ENCODE measurements at regions of chr11 and their contacts with region 1.

Region 1: DNA sequence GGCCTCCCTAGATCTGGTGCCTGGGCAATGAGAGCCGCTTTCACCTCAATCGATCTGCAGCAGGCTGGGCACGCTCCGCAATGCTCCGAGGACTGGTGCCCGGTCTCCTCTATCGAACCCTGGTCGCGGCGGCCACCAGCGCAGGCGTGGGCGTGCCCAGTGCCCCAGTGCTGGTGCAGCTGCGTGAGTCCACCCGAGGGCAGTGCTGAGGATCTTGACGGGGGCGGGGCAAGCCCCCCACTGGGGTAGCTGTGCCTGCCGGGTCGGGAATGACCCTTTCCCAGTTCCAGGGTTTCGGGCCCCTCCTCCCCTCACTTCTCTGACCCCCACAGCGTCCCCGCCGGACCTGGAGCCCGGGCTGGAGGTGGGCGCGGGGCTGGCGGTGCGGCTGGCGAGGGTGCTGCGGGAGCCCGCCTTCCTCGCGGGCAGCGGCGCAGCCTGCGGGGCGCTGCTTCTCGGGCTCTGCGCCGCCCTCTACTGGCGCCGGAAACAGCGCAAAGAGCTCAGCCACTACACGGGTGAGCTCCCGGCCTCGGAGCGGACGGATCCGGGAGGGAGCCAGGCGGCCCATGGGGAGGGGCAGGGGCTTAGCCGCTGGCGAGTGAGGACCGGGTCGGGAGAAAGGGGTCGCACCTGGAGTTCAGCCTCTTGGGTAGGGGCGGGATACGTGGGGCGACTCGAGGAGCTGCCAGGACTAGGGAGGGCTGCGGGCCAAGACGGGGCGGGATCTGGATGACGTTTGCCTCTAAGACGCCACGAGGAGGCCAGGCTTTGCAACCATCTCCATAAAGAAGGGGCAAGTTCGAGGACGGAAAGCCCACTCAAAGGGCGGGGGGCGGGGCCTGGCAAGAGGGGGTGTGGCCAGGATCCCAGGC is 10.9 kb downstream of the ROBO3 start:
- DNase-seq: peak; percentile 71 to 84 (median 81)
- ATAC-seq: peak; percentile 94
- H3K4me3 ChIP-seq: peak overlapping the region; percentile 98
- H3K4me3 Mint-ChIP-seq: peak overlapping the region; percentile 85 to 94 (median 90)
- H3K27ac ChIP-seq: peak overlapping the region; percentile 79
- H3K27ac Mint-ChIP-seq: peak overlapping the region; percentile 77 to 95 (median 92)
- H3K4me1 ChIP-seq: peaks cover 7 to 9% of the 10 kb centered on the region in 2 donors
- H3K4me1 Mint-ChIP-seq: peaks cover 11 to 34% (median 24%) of the 10 kb centered on the region in 7 donors
- H3K27me3 ChIP-seq: peaks cover 0 to 3% of the 10 kb centered on the region in 2 donors
- H3K27me3 Mint-ChIP-seq: peaks cover 18 to 49% (median 34%) of the 10 kb centered on the region in 5 donors

Region 2: GRCh38 chr11:123741159-123742028 is 1134.8 kb before region 1 on chr11 and contains the start of gene ZNF202:
- CTCF ChIA-PET with region 1: no interaction called
- POLR2A ChIA-PET with region 1: no interaction called
- intact Hi-C with region 1: loop called (anchors 1 to 5 kb)
- DNase-seq: peak; percentile 83 to 92 (median 89)
- ATAC-seq: peak; percentile 98
- H3K4me3 ChIP-seq: peak within 1 kb of the TSS; percentile 92
- H3K4me3 Mint-ChIP-seq: peak within 1 kb of the TSS; percentile 85 to 100 (median 96)
- H3K27ac ChIP-seq: peak within 1 kb of the TSS; percentile 85
- H3K27ac Mint-ChIP-seq: peak within 1 kb of the TSS; percentile 91 to 98 (median 95)
- H3K4me1 ChIP-seq: peaks cover 19% of the 10 kb centered on the region in 2 donors
- H3K4me1 Mint-ChIP-seq: peaks cover 30 to 57% (median 46%) of the 10 kb centered on the region in 7 donors
- H3K27me3 ChIP-seq: no peaks in the 10 kb centered on the region
- H3K27me3 Mint-ChIP-seq: peaks cover 0 to 24% (median 6%) of the 10 kb centered on the region in 5 donors
- total RNA-seq, gene ZNF202: 13.0 to 27.0 (median 18.6) TPM

Region 3: DNA sequence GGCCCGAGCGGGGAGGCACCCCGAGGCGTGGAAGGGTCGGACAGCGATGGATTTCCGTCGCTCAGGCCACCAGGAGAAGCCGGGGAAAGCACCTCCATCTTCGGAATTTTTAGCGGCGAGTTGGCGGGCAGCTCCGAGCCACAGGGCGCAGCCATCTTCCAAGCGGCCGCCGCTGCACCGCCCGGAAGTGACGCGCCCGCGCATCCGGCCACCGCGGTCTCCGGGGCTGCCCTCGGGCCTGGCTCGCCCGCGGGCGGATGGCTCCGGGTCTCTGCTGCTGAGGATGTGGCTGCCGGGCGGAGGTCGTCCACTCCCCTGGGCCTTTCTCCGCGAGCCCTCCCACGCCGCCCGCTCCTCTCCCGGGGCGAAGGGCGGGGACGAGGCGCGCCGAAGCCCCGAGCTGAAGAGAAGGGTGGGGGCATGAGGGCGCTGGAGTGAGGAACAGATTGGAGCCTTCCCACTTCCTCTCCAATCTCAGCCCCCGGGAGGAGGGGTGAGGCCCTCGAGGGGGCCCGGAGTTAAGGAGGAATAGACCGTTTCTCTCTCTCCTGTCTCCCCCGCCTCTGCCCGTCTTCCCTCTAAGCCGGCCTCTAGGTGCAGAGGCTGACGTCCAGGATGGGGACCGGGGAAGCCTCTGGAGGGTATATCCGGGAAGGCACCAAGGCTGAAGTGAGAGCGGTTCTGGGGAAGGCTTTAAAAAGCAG is 75.8 kb before region 1 on chr11 and contains the start of gene MSANTD2:
- CTCF ChIA-PET with region 1: no interaction called
- POLR2A ChIA-PET with region 1: no interaction called
- intact Hi-C with region 1: loop called (anchors 1 to 2 kb)
- DNase-seq: peak; percentile 65 to 89 (median 73)
- ATAC-seq: peak; percentile 92
- H3K4me3 ChIP-seq: peak within 1 kb of the TSS; percentile 71
- H3K4me3 Mint-ChIP-seq: peak within 1 kb of the TSS; percentile 88 to 97 (median 96)
- H3K27ac ChIP-seq: peak within 1 kb of the TSS; percentile 93
- H3K27ac Mint-ChIP-seq: peak within 1 kb of the TSS; percentile 88 to 98 (median 94)
- H3K4me1 ChIP-seq: peaks cover 8 to 14% of the 10 kb centered on the region in 2 donors
- H3K4me1 Mint-ChIP-seq: peaks cover 13 to 38% (median 32%) of the 10 kb centered on the region in 7 donors
- H3K27me3 ChIP-seq: no peaks in the 10 kb centered on the region
- H3K27me3 Mint-ChIP-seq: peaks cover 0 to 24% (median 0%) of the 10 kb centered on the region in 5 donors
- total RNA-seq, gene MSANTD2: 9.1 to 29.5 (median 14.4) TPM

Region 4: GRCh38 chr11:124812876-124813275 is 63.3 kb before region 1 on chr11:
- CTCF ChIA-PET with region 1: no interaction called
- POLR2A ChIA-PET with region 1: no interaction called
- intact Hi-C with region 1: no loop called
- DNase-seq: no peak
- ATAC-seq: no peak
- H3K4me3 ChIP-seq: no peak overlapping the region
- H3K4me3 Mint-ChIP-seq: no peak overlapping the region
- H3K27ac ChIP-seq: no peak overlapping the region
- H3K27ac Mint-ChIP-seq: no peak overlapping the region
- H3K4me1 ChIP-seq: no peaks in the 10 kb centered on the region
- H3K4me1 Mint-ChIP-seq: no peaks in the 10 kb centered on the region
- H3K27me3 ChIP-seq: no peaks in the 10 kb centered on the region
- H3K27me3 Mint-ChIP-seq: peaks cover 26 to 44% (median 37%) of the 10 kb centered on the region in 5 donors

Region 5: DNA sequence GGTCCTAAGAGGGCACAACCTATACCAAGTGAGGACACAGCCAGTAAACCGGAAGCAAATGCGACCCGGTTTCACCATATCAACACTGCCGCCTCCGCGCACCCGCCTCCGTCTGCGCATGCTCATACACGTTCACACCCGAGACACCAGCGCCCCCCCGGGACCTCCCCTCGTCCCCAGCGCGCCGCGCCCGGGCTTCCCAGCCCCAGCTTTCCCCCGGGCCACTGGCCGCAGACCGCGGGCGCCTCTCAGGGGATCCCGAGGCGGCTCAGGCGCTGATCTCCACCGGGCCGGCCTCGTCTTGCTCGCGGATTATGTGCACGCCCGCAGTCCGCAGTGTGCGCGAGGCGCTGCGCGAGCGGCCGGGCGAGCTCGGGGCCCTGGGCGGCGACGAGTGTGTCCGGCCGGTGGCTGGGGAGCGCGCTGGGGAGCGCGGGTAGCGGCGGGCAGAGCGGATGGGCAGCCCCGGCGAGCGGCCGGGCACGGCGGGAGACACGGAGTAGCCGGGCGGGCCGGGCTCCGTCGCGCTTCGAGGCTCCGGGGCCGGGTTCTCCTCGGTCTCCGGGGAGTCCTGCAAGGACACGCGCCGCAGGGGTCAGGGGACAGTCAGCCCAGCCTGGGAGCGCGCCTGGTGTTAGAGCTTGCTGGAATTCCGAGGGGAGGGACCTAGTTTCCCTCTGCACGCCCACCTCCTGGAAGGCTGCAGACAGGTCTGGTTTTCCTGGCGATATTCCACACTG is 44.9 kb after region 1 on chr11:
- CTCF ChIA-PET with region 1: interaction called, 5 read pairs
- POLR2A ChIA-PET with region 1: interaction called, 6 read pairs
- intact Hi-C with region 1: loop called (anchors 1 to 5 kb)
- DNase-seq: peak; percentile 61 to 86 (median 78)
- ATAC-seq: peak; percentile 81
- H3K4me3 ChIP-seq: peak overlapping the region; percentile 46
- H3K4me3 Mint-ChIP-seq: peak overlapping the region; percentile 65 to 85 (median 80)
- H3K27ac ChIP-seq: peak overlapping the region; percentile 47
- H3K27ac Mint-ChIP-seq: peak overlapping the region in 8 of 9 donors; percentile 32 to 85 (median 62)
- H3K4me1 ChIP-seq: peaks cover 0 to 21% of the 10 kb centered on the region in 2 donors
- H3K4me1 Mint-ChIP-seq: peaks cover 8 to 46% (median 40%) of the 10 kb centered on the region in 7 donors
- H3K27me3 ChIP-seq: no peaks in the 10 kb centered on the region
- H3K27me3 Mint-ChIP-seq: peaks cover 0 to 12% (median 0%) of the 10 kb centered on the region in 5 donors

Region 6: GRCh38 chr11:125902927-125903710 is 1026.9 kb after region 1 on chr11 and contains the start of gene PUS3:
- CTCF ChIA-PET with region 1: no interaction called
- POLR2A ChIA-PET with region 1: no interaction called
- intact Hi-C with region 1: loop called in 1 of 2 experiments (anchors 1 kb)
- DNase-seq: peak; percentile 73 to 88 (median 83)
- ATAC-seq: peak; percentile 96
- H3K4me3 ChIP-seq: peak within 1 kb of the TSS; percentile 91
- H3K4me3 Mint-ChIP-seq: peak within 1 kb of the TSS; percentile 82 to 98 (median 96)
- H3K27ac ChIP-seq: peak within 1 kb of the TSS; percentile 86
- H3K27ac Mint-ChIP-seq: peak within 1 kb of the TSS; percentile 83 to 96 (median 92)
- H3K4me1 ChIP-seq: peaks cover 7 to 13% of the 10 kb centered on the region in 2 donors
- H3K4me1 Mint-ChIP-seq: peaks cover 21 to 54% (median 39%) of the 10 kb centered on the region in 7 donors
- H3K27me3 ChIP-seq: peaks cover 0 to 4% of the 10 kb centered on the region in 2 donors
- H3K27me3 Mint-ChIP-seq: peaks cover 18 to 40% (median 29%) of the 10 kb centered on the region in 5 donors
- total RNA-seq, gene PUS3: 4.6 to 15.3 (median 9.3) TPM

Measured in naive thymus-derived CD4-positive, alpha-beta T cell (primary cell).